ENCODE measurements at regions of chr12 and their contacts with region 1.

Region 1: GRCh38 chr12:3604748-3605586 is 114.0 kb downstream of the PRMT8 start:
- DNase-seq: peak; percentile 76 to 86 (median 82)
- ATAC-seq: peak; percentile 59 to 85 (median 78)
- H3K4me3 ChIP-seq: no peak overlapping the region
- H3K27ac ChIP-seq: peak overlapping the region in 10 of 12 donors; percentile 22 to 88 (median 73)
- H3K4me1 ChIP-seq: peaks cover 0 to 54% (median 26%) of the 10 kb centered on the region in 12 donors
- H3K27me3 ChIP-seq: peaks cover 0 to 10% (median 0%) of the 10 kb centered on the region in 9 donors
- CTCF ChIP-seq: no peak
- POLR2A ChIP-seq: no peak

Region 2: GRCh38 chr12:3491938-3492792 is 112.8 kb before region 1 on chr12:
- intact Hi-C with region 1: loop called in 1 of 10 experiments (anchors 10 kb)
- DNase-seq: peak in 4 of 5 donors; percentile 41 to 65 (median 52)
- ATAC-seq: peak; percentile 62 to 89 (median 84)
- H3K4me3 ChIP-seq: peak overlapping the region; percentile 22 to 51 (median 44)
- H3K27ac ChIP-seq: no peak overlapping the region
- H3K4me1 ChIP-seq: peaks cover 0 to 35% (median 7%) of the 10 kb centered on the region in 12 donors
- H3K27me3 ChIP-seq: peaks cover 22 to 77% (median 57%) of the 10 kb centered on the region in 9 donors
- CTCF ChIP-seq: peak in 1 of 12 donors; percentile 6
- POLR2A ChIP-seq: no peak

Region 3: DNA sequence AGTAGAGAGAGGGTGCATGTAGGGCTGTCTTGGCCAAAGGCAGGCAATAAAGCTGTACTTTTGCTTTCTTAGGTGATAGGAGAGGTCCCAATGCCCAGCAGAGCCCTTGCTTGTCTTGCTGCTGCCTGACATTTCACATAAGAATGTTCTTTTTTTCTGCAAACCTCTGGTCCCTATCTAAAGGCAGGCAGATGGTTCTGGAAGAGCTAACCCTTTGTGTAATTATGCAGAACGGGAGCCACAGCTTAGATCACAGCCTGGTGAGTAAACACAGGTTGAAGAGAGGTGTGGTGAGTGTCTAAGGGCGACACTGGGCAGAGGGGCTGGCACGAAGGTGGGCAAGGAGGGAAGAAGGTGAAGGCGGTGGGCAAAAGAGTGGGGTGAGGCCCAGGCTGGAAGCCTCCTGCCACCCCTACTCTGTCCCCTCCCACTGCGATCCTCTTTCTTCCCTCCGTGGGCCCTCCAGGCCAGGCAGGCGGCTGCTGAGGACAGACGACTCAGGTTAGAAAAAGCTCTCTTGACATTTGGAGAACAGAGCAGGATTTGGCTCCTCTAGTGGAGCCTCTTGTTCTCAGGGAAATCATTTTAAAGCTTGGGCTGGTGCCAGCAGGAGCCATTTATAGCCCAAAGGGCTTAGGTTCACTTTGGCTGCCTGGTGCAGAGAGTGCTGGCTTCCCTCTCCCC is 71.1 kb before region 1 on chr12:
- intact Hi-C with region 1: loop called in 4 of 10 experiments (anchors 5 kb)
- DNase-seq: peak in 4 of 5 donors; percentile 65 to 86 (median 73)
- ATAC-seq: peak; percentile 78 to 87 (median 84)
- H3K4me3 ChIP-seq: no peak overlapping the region
- H3K27ac ChIP-seq: peak overlapping the region in 11 of 12 donors; percentile 24 to 81 (median 69)
- H3K4me1 ChIP-seq: peaks cover 0 to 44% (median 5%) of the 10 kb centered on the region in 12 donors
- H3K27me3 ChIP-seq: peaks cover 0 to 4% (median 0%) of the 10 kb centered on the region in 9 donors
- CTCF ChIP-seq: peak in 7 of 12 donors; percentile 8 to 49 (median 32)
- POLR2A ChIP-seq: no peak

Measured in heart left ventricle (tissue), 16 donors.